CD14-positive monocyte (primary cell): ENCODE measurements at regions of chr22 and their contacts with region 1.

Region 1: DNA sequence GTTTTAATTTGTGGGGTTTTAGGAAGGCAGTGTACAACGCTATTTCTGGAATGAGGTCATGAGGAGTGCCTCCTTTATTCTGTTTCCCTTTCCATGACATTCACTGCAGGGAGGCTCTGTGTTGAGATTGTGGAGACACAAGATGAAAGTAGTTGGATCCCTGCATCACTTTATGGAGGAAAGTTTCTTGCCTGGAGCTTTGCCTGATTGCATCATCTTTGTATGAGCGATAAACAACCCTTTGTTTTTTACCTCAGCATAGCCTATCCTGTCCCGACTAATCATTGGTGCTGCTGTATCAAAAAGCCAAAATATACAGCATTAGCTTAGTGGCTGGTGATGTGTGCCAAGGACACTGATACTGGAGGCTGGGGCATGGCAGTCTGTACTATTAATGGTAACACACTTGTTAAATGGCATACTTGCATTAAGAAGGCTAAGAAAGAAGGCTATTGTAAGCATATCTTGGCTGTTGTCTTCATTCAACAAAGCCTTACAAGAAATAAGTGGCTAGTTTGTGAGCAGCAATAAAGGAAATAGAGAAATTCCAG is 31.2 kb upstream of the SLC5A4 start:
- DNase-seq: no peak
- H3K4me3 ChIP-seq: no peak overlapping the region
- H3K4me3 Mint-ChIP-seq: no peak overlapping the region
- H3K27ac ChIP-seq: no peak overlapping the region
- H3K27ac Mint-ChIP-seq: no peak overlapping the region
- H3K4me1 ChIP-seq: no peaks in the 10 kb centered on the region
- H3K4me1 Mint-ChIP-seq: no peaks in the 10 kb centered on the region
- H3K27me3 ChIP-seq: no peaks in the 10 kb centered on the region
- H3K27me3 Mint-ChIP-seq: peaks cover 13 to 20% (median 15%) of the 10 kb centered on the region in 3 donors
- CTCF ChIP-seq: no peak

Region 2: GRCh38 chr22:32246166-32246565 is 40.2 kb before region 1 on chr22:
- intact Hi-C with region 1: loop called in 1 of 2 experiments (anchors 2 kb)
- DNase-seq: no peak
- H3K4me3 ChIP-seq: no peak overlapping the region
- H3K4me3 Mint-ChIP-seq: no peak overlapping the region
- H3K27ac ChIP-seq: no peak overlapping the region
- H3K27ac Mint-ChIP-seq: no peak overlapping the region
- H3K4me1 ChIP-seq: no peaks in the 10 kb centered on the region
- H3K4me1 Mint-ChIP-seq: peaks cover 4% of the 10 kb centered on the region
- H3K27me3 ChIP-seq: peaks cover 4 to 7% of the 10 kb centered on the region in 2 donors
- H3K27me3 Mint-ChIP-seq: peaks cover 7 to 34% (median 8%) of the 10 kb centered on the region in 3 donors
- CTCF ChIP-seq: no peak